ENCODE measurements at regions of chr3 and their contacts with region 1.

Region 1: GRCh38 chr3:126522363-126522788 is 1.6 kb upstream of the CHST13 start:
- DNase-seq: peak; percentile 44 to 72 (median 59)
- H3K4me3 ChIP-seq: no peak overlapping the region
- H3K27ac ChIP-seq: no peak overlapping the region
- H3K4me1 ChIP-seq: no peaks in the 10 kb centered on the region
- H3K27me3 ChIP-seq: no peaks in the 10 kb centered on the region
- CTCF ChIP-seq: peak; percentile 61 to 89 (median 61)
- EP300 ChIP-seq: no peak
- POLR2A ChIP-seq: no peak

Region 2: DNA sequence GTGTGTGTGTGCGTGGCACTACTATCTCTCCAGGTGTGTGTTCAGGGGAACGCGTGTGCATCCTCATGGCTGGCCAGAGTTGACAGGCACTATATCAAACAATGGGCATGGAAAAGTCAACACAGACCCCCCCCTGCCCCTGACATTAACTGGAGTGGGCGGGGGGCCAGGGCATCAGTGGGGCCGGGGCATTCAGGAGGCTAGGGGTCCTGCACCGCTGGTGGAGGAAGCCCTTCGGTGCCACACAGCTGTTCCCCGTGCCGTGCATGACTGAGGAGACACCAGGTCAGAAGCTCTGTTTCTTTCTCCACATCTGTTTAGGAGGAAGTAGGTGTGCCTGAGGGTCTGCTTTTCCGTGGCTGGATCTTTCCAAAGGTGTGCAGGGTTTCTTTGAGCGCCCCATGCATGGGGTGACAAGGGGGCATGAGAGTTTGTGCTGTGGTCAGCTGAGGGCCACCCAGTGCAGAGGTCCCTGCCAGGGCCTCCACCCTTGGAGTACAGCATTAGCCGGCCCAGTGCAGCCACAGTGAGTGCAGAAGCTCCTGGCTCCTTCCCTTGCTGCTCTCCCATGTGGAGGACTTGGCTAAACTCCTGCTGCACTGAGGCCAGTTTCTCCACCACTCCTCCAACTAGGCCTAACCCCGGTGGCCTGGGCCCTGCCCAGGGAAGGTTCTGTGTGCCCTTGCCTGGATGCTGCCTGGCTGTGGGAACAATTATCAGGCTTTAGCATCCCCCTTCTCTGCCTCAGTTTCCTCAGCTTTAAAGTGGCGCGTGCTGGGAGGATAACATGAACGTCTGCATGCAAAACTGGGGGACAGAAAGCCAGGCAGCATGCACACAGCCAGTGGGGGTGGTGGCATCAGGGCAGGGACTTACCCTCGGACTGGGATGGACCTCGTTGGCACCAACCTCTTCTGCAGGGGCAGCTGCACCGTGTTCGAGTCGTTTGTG is 29.0 kb after region 1 on chr3:
- intact Hi-C with region 1: no loop called
- DNase-seq: peak in 1 of 5 donors; percentile 38
- H3K4me3 ChIP-seq: no peak overlapping the region
- H3K27ac ChIP-seq: no peak overlapping the region
- H3K4me1 ChIP-seq: no peaks in the 10 kb centered on the region
- H3K27me3 ChIP-seq: no peaks in the 10 kb centered on the region
- CTCF ChIP-seq: no peak
- EP300 ChIP-seq: no peak
- POLR2A ChIP-seq: no peak

Region 3: GRCh38 chr3:126659945-126660886 is 137.8 kb after region 1 on chr3:
- intact Hi-C with region 1: loop called in 1 of 4 experiments (anchors 10 kb)
- DNase-seq: no peak
- H3K4me3 ChIP-seq: no peak overlapping the region
- H3K27ac ChIP-seq: no peak overlapping the region
- H3K4me1 ChIP-seq: no peaks in the 10 kb centered on the region
- H3K27me3 ChIP-seq: no peaks in the 10 kb centered on the region
- CTCF ChIP-seq: no peak
- EP300 ChIP-seq: no peak
- POLR2A ChIP-seq: no peak

Measured in ovary (tissue), 10 donors.